Activated CD4-positive, alpha-beta memory T cell treated with anti-CD3 and anti-CD28 coated beads for 36 hours (primary cell): ENCODE measurements at regions of chr6 and their contacts with region 1.

Region 1: DNA sequence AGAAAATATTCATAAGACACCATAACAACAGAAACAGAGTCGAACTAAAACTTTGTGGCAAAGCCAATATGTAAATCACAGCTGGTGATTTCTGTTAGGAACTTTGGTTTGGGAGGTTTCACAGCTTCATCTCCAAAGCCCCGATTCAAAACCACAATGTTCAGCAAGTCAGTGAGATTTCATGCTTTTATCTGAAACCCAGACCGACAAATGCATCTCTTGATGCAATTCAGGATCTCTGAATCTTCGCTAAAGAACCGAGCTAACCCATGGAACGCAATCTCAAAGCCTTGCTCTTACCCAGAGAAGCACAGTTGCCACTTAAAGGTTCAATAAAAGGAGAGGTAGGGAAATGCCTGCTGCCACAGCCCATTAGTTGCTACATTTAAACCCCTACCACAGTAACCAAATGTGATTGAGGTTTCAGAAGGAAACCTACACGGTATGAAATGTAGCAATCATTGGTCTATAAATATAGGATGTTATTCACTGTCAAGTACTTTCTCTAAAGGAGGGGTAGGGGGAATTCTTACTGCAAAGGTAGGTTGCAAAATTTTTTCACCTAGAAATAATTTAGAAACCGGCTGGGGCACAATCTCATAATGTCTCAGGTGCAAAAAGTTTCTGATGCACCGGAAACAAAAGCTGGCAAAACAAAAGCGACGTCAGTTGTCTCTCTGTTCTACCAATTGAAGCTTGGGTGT is 381.0 kb upstream of the ARID1B start:
- DNase-seq: peak; percentile 32
- H3K4me3 Mint-ChIP-seq: peak overlapping the region; percentile 69
- H3K27ac Mint-ChIP-seq: peak overlapping the region; percentile 72
- H3K4me1 Mint-ChIP-seq: peaks cover 71% of the 10 kb centered on the region
- H3K27me3 Mint-ChIP-seq: peaks cover 6% of the 10 kb centered on the region

Region 2: DNA sequence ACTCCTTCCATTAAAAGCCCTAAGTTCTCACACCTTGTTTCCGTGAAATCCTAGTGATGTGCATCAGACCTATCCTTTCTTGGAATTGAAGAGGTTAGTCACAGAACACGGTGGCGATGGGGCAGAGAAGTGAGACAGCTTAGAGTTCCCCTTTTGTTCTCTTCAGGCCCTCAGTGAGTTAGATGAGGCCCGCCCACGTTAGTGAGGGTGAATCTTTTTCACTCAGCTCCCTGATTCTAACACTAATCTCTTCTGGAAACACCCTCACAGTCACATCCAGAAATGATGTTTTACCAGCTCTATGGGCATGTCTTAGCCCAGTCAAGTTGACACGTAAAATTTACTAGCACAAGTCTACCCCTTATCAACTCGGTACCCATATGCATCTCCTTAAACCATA is 767.9 kb before region 1 on chr6:
- CTCF ChIA-PET with region 1: no interaction called
- POLR2A ChIA-PET with region 1: no interaction called
- intact Hi-C with region 1: loop called (anchors 5 kb)
- DNase-seq: peak; percentile 85
- H3K4me3 Mint-ChIP-seq: peak overlapping the region; percentile 8
- H3K27ac Mint-ChIP-seq: peak overlapping the region; percentile 95
- H3K4me1 Mint-ChIP-seq: peaks cover 18% of the 10 kb centered on the region
- H3K27me3 Mint-ChIP-seq: peaks cover 1% of the 10 kb centered on the region

Region 3: DNA sequence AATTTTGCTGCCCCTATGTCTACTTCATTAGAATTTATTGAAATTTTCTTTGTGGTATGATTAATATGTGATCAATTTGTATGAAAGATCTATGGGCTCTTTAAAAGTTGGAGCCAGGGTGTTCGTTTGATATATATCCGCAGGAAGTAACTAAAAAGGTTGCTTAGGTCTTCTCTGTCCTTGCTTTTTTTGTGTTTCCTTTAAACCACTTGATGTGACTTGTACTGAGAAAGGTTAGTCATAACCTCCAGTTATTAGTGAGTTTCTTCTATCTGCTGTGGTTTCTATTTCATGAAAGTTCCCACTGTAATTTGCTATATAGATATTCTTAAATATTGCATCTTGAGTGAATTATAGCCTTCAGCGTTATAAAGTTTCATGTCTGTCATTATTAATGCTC is 204.3 kb before region 1 on chr6:
- CTCF ChIA-PET with region 1: no interaction called
- POLR2A ChIA-PET with region 1: no interaction called
- intact Hi-C with region 1: loop called (anchors 5 kb)
- DNase-seq: no peak
- H3K4me3 Mint-ChIP-seq: no peak overlapping the region
- H3K27ac Mint-ChIP-seq: no peak overlapping the region
- H3K4me1 Mint-ChIP-seq: peaks cover 17% of the 10 kb centered on the region
- H3K27me3 Mint-ChIP-seq: no peaks in the 10 kb centered on the region

Region 4: GRCh38 chr6:156425359-156426020 is 29.3 kb after region 1 on chr6:
- CTCF ChIA-PET with region 1: interaction called, 3 read pairs
- POLR2A ChIA-PET with region 1: interaction called, 3 read pairs
- intact Hi-C with region 1: loop called (anchors 2 kb)
- DNase-seq: no peak
- H3K4me3 Mint-ChIP-seq: no peak overlapping the region
- H3K27ac Mint-ChIP-seq: no peak overlapping the region
- H3K4me1 Mint-ChIP-seq: peaks cover 32% of the 10 kb centered on the region
- H3K27me3 Mint-ChIP-seq: no peaks in the 10 kb centered on the region

Region 5: DNA sequence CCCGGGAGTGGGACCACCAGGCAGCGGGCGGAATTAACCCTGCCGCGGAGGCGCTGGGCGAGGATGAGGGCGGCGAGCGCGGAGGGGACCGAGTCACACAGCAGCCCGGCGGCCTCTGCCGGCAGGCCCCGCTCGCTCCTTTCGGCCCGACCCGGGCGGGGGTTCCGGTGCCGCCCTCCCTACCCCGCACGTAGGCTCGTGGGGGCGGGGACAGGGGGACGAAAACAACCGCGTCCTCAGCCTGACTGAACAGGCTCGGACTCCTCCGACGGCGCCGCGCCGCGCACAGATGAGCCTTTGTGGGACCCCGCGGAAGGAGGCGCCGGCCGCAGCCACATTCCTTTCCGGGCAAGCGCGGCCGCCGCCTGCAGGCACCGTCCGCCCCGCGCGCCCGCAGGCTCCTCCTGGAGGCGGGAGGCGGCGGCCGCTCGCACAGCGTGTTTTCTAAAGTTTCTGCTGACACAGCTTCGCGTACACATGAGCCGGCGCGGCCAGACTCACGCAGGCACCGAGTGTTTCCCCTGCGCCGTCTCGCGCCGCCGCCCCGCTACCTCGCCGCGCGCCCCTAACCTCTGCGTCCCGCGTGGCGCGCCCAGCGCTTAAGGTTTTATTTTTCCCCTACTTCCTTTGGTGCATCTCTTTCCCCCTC is 625.2 kb after region 1 on chr6:
- CTCF ChIA-PET with region 1: no interaction called
- POLR2A ChIA-PET with region 1: no interaction called
- intact Hi-C with region 1: loop called (anchors 1 kb)
- DNase-seq: peak; percentile 93
- H3K4me3 Mint-ChIP-seq: peak overlapping the region; percentile 87
- H3K27ac Mint-ChIP-seq: peak overlapping the region; percentile 99
- H3K4me1 Mint-ChIP-seq: peaks cover 47% of the 10 kb centered on the region
- H3K27me3 Mint-ChIP-seq: no peaks in the 10 kb centered on the region